Activated CD4-positive, alpha-beta memory T cell treated with anti-CD3 and anti-CD28 coated beads for 36 hours (primary cell): ENCODE measurements at regions of chr9 and their contacts with region 1.

Region 1: GRCh38 chr9:75130621-75131230 is 42.4 kb downstream of the OSTF1 start:
- DNase-seq: no peak
- H3K4me3 Mint-ChIP-seq: no peak overlapping the region
- H3K27ac Mint-ChIP-seq: no peak overlapping the region
- H3K4me1 Mint-ChIP-seq: peaks cover 38% of the 10 kb centered on the region
- H3K27me3 Mint-ChIP-seq: no peaks in the 10 kb centered on the region

Region 2: DNA sequence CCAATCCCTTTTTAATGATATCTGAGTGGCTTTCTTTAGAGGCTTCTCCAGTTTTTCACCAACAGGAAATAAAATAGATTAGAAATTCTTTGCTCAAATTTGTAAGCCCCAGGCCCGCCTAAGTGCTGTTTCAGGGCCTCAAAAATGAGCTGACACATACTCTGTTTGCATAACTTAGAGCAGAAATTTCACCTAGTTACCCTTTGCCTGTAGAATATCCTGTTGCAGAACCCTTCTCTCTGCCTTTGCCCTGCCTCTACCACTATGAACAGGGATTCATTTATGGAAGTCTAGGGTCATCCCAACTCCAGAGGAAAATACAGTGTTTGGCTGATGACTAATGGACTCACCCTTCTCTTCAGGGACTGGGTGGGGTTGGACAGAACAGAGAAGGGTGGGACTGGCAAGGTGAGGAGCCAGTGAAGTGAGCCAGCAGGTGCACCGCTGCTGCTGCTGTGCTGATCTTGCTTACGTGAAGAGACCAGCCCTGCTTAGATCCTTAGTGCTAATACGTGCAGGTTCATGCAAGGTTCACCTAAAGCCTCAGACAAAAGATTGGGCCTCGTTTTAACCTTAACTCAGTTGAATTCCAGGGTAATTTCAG is 19.6 kb before region 1 on chr9:
- CTCF ChIA-PET with region 1: no interaction called
- POLR2A ChIA-PET with region 1: no interaction called
- intact Hi-C with region 1: loop called (anchors 2 kb)
- DNase-seq: no peak
- H3K4me3 Mint-ChIP-seq: no peak overlapping the region
- H3K27ac Mint-ChIP-seq: peak overlapping the region; percentile 28
- H3K4me1 Mint-ChIP-seq: peaks cover 51% of the 10 kb centered on the region
- H3K27me3 Mint-ChIP-seq: no peaks in the 10 kb centered on the region

Region 3: DNA sequence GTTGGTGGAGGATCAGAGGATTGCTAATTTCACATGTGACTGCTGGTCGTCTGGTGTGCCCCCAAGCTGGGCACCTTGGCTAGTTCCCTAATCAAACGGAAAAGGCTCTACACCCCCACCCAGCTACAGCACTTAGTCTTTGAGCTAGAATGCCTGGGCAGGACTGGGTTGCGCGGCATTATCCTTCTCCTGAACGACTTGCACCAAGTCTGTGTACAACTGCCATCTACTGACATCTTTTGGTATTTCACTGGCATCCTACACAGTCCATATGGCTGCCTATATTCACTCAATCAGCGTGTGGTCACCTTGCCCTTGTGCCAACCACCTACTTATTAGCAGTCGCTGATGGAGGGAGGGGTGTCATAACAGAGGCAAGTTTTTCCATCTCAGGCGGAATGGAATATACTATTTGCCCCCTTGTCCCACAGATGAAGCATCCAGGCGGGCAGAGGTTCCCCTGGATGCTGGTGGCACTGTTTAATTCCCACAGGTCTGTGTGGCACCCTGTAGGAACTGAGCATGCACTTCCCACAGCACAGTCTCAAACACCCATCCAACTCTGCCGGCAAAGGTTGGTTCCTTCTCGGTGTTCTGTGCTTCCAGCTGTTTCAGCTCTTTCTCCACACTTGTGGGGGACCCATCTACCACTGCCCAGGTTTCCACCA is 107.7 kb after region 1 on chr9:
- CTCF ChIA-PET with region 1: no interaction called
- POLR2A ChIA-PET with region 1: no interaction called
- intact Hi-C with region 1: no loop called
- DNase-seq: peak; percentile 51
- H3K4me3 Mint-ChIP-seq: no peak overlapping the region
- H3K27ac Mint-ChIP-seq: no peak overlapping the region
- H3K4me1 Mint-ChIP-seq: peaks cover 3% of the 10 kb centered on the region
- H3K27me3 Mint-ChIP-seq: no peaks in the 10 kb centered on the region